ENCODE measurements at regions of chr16 and their contacts with region 1.

Region 1: GRCh38 chr16:56356276-56357240 is 68.8 kb downstream of the AMFR start:
- DNase-seq: peak; percentile 46
- H3K4me3 Mint-ChIP-seq: peak overlapping the region; percentile 71
- H3K27ac Mint-ChIP-seq: peak overlapping the region; percentile 88
- H3K4me1 Mint-ChIP-seq: peaks cover 38% of the 10 kb centered on the region
- H3K27me3 Mint-ChIP-seq: peaks cover 2% of the 10 kb centered on the region

Region 2: DNA sequence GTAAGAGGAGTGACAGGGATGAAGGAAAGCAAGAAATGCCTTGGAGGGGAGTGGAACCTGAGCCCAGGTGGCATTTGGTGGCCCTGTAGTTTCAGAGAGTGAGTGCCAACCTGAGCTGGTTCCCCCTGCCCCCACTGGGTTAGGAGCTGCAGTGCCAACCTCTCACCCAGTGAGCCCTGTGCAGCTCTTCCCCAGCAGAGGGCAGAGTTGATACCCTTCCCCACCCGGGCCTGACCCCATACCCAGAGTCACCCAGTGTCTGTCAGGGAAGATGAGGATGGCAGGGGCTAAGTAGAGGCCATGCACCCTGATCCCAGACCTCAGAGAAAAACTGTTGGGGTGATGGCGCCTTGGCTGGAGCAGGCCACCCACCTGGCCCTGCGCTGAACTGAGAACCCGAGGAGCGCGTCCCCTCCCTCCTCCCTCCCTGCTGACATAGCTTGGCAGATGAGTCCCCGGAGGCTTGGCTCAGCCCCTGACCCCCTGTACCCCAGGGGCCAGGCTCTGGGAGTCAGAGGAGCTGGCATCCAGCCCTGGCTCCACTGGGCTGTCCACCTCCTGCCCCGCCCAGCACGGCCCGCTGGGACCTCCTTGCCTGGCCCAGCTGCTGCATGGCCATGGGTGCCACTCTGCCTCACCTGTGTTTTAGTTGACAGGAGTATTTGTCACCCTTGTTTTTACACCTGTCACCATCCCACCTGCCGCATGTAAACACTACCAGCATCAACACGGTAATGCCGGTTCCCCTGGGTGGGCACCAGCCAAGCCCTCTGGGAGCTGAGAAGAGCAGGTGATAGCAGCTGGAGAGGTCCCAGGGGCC is 45.1 kb before region 1 on chr16:
- intact Hi-C with region 1: no loop called
- DNase-seq: no peak
- H3K4me3 Mint-ChIP-seq: no peak overlapping the region
- H3K27ac Mint-ChIP-seq: no peak overlapping the region
- H3K4me1 Mint-ChIP-seq: peaks cover 8% of the 10 kb centered on the region
- H3K27me3 Mint-ChIP-seq: peaks cover 8% of the 10 kb centered on the region

Region 3: GRCh38 chr16:56425439-56425832 is 68.9 kb after region 1 on chr16 and contains the start of gene AMFR:
- intact Hi-C with region 1: loop called (anchors 1 kb)
- DNase-seq: peak; percentile 73
- H3K4me3 Mint-ChIP-seq: peak within 1 kb of the TSS; percentile 98
- H3K27ac Mint-ChIP-seq: peak within 1 kb of the TSS; percentile 85
- H3K4me1 Mint-ChIP-seq: peaks cover 35% of the 10 kb centered on the region
- H3K27me3 Mint-ChIP-seq: peaks cover 4% of the 10 kb centered on the region
- total RNA-seq, gene AMFR: 57.2 and 64.3 TPM in 2 replicates

Region 4: GRCh38 chr16:56729735-56730662 is 373.4 kb after region 1 on chr16 and contains the start of gene NUP93:
- intact Hi-C with region 1: loop called (anchors 5 kb)
- DNase-seq: peak; percentile 87
- H3K4me3 Mint-ChIP-seq: no peak within 1 kb of the TSS
- H3K27ac Mint-ChIP-seq: peak within 1 kb of the TSS; percentile 88
- H3K4me1 Mint-ChIP-seq: peaks cover 13% of the 10 kb centered on the region
- H3K27me3 Mint-ChIP-seq: peaks cover 2% of the 10 kb centered on the region
- total RNA-seq, gene NUP93: 150 and 152 TPM in 2 replicates